Left cardiac atrium (tissue), 4 donors: ENCODE measurements at regions of chr1 and their contacts with region 1.

Region 1: DNA sequence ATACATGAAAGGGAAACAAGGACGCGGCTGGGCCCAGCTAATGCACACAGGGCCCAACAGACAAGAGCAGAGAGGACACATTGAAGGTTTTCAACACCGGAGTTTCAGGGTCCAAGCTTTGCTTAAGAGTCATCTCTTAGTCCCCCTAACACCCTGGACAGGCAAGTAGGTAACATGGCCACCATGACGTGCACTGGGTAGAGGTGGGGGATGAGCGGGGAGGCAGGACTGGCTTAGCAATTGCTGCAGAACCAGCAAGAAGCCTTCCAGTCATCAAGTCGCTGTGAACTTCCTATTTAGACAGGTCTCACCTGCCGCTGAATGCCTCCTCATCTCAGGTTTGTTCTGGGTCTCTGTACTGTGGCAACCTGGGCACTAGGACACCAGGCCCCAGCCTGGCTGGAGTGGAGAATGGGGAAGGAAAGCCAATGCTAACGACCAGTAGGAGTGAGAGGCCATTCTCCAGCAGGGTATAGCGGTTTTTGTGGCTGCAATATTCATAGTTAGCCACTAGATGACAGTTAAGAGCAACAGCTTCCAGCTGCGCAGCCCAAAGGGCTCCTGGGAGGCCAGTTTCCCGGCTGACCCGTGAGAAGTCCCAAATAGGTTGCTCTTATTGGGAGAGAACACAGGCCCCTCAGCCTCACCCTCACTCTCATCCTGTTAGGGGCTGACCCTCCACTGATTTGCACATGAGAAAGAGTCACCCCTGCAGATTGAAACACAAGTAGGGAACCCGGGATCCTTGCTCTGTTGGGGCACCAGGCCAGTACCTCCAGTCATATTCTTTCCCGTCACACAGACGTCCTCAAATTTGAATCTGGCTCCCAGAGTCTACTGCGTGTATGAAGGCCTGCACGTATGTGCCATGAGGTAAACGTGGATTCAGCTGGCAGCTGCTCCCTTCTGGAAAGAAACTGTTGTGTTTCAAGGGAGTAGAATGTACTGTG is 6.0 kb upstream of the PIGC start:
- DNase-seq: peak; percentile 66
- ATAC-seq: peak; percentile 86 to 88

Region 2: DNA sequence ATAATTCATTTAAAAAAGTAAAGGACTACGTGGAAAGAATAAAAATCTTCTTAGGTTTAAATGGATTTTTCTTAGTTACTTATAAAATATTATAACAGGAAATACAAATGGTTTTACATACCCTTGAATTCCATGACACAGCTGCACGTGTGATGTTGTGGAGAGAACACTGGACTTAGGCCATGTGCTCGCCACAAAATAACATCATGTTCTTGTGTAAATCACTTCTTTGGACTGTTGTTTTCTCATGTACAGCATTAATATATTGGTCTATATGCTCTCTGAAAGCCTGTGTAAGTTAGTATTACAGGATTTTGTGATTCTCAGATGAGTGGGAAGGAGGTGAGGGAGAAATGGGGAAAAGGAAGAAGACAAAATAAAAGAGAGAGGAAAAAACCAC is 380.3 kb before region 1 on chr1:
- intact Hi-C with region 1: no loop called
- DNase-seq: no peak
- ATAC-seq: no peak

Region 3: GRCh38 chr1:172308577-172308976 is 141.3 kb before region 1 on chr1:
- intact Hi-C with region 1: no loop called
- DNase-seq: no peak
- ATAC-seq: no peak

Region 4: DNA sequence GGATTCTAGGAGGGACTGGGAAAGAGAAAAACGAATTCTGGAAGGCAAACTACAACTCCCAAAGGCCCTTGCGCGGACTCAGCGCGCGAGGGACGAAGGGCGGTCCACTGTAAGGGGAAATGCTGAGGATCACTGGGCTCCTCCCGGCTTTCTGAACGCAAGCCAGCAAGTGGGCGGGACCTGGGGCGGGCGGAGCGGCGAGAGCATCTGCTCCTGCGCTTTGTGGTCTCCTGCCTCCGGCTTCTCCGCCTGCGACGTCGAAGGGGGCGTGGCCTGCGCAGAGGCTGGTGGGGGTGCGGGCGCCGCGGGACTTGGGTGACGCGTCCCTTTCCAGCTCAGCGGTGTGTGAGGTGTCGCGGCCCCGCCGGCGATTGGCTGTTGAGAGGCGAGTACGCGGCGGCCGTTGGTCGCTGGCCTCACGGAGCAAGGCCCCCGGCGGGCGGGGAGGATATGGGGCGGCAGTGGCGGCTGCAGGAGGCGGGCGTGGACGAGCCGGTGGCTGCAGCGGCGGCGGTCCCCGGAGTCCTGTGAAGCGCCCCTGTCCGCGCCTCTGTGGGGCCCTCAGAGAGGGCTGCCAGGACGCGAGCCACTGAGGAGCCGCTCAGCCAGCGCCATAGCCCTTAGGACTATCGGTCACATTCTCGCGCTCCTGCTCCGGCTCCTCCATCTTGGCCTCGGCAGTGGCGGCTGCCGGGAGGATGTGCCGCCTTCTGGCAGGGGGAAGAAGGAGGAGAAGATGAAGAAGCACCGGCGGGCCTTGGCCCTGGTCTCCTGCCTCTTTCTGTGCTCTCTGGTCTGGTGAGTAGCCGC is 83.0 kb after region 1 on chr1 and contains the start of gene SUCO:
- intact Hi-C with region 1: loop called in 1 of 2 experiments (anchors 2 kb)
- DNase-seq: peak; percentile 99
- ATAC-seq: peak; percentile 96 to 97
- total RNA-seq, gene SUCO: 25.4 to 30.6 TPM

Region 5: DNA sequence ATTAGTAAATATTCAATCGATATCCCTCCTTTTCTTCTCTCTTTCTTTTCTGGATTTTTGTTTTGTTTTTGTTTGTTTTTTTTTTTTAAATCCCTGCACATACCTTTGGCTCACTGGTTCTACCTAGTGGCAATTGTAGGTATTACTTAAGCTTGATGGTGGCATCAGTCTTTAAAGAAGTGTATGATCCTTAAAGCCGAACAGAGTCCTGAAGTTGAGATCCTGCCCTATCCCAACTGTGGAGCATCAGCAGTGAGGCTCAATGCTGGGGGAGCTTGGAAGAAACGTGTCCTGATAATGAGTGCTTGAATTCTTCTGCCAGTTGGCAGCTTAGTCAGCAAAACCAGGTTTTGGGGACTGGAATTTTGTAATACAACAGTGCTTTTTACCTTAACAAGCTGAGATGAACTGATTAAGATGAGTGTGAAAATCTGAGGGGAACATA is 269.9 kb after region 1 on chr1:
- intact Hi-C with region 1: loop called in 1 of 2 experiments (anchors 5 kb)
- DNase-seq: no peak
- ATAC-seq: peak; percentile 44 to 74